ENCODE measurements at regions of chrX and their contacts with region 1.

Region 1: DNA sequence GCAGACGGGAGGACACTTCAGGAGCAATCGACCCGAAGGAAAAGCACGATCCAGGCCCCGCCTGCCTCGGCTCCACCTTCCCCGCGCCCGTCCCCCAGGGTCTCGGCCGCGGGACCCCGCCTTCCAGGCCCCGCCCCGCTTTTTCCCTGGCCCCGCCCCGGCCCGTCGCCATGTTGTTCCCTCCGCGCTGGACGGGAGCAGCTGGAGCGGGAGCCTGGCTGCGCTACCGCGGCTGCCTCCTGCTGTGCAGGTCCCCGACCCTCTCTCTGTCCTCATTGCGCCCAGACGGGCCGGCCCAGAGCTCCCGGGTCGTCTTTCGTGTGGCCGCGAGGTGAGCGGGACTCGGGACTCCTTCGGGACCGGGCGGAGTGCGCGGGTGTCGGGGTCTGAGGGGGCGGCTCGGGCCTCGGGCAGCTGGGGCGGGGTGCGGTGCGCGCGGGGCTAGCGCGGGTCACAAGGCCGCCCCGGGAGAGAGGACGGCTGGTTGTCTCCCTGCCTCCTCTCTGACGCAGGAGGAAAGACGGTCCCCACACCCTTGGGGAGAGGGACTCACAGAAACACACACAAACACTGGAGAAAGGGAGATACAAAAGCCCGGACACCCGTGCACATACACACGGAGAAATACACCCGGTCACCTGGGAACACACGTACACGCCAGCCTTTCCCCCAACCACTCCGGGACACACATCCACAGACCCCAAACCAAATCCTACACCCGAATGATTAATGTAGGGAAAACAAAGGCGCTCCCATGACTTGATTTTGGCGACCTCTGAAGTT is at the start of gene RAB9A:
- DNase-seq: peak; percentile 71
- H3K4me3 Mint-ChIP-seq: peak within 1 kb of the TSS; percentile 87
- H3K27ac Mint-ChIP-seq: peak within 1 kb of the TSS; percentile 93
- H3K4me1 Mint-ChIP-seq: peaks cover 48% of the 10 kb centered on the region
- H3K27me3 Mint-ChIP-seq: no peaks in the 10 kb centered on the region
- total RNA-seq, gene RAB9A: 13.0 and 14.6 TPM in 2 replicates

Region 2: DNA sequence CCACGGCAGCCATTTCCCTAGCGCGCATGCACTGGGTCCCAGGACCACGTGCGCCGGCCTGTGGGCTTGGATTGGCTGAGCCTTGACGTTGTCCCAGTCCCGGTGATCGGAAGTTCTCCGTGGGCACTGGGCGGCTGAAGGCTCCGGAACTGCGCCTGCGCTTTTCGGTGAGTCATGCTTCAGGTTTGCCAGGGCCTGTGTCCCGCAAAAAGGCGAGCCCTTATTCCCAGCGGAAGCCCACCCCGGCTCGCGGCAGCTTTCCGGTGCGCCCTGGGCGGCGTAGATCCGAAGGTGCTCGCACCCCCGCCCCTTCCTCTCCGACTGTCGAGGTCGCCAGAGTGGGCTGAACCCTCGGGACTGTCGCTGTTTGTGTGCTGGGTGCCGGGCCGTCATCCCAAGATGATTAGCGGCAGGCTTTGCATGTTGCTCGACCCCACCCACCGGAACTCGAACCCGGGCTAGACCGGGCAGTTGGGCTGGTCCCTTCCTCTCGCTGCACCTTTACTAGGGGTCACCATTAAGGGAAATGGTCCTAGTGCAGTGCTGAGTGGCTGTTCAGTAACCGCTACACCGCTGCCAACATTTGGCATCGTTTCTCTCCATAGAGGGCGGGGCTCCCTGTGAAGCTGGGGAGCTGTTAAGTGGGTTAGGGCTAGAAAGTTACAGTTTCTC is 36.0 kb before region 1 on chrX and contains the start of gene TCEANC:
- intact Hi-C with region 1: loop called (anchors 1 kb)
- DNase-seq: peak; percentile 91
- H3K4me3 Mint-ChIP-seq: peak within 1 kb of the TSS; percentile 84
- H3K27ac Mint-ChIP-seq: peak within 1 kb of the TSS; percentile 89
- H3K4me1 Mint-ChIP-seq: peaks cover 17% of the 10 kb centered on the region
- H3K27me3 Mint-ChIP-seq: no peaks in the 10 kb centered on the region
- total RNA-seq, gene TCEANC: 2.5 and 2.8 TPM in 2 replicates

Region 3: GRCh38 chrX:13669246-13669737 is 19.9 kb before region 1 on chrX:
- intact Hi-C with region 1: loop called (anchors 1 kb)
- DNase-seq: no peak
- H3K4me3 Mint-ChIP-seq: peak overlapping the region; percentile 7
- H3K27ac Mint-ChIP-seq: peak overlapping the region; percentile 91
- H3K4me1 Mint-ChIP-seq: peaks cover 10% of the 10 kb centered on the region
- H3K27me3 Mint-ChIP-seq: no peaks in the 10 kb centered on the region

Region 4: GRCh38 chrX:13734278-13735172 is 45.4 kb after region 1 on chrX and contains the starts of genes OFD1 and TRAPPC2:
- intact Hi-C with region 1: loop called (anchors 2 kb)
- DNase-seq: peak; percentile 87
- H3K4me3 Mint-ChIP-seq: peak within 1 kb of the TSS; percentile 95
- H3K27ac Mint-ChIP-seq: peak within 1 kb of the TSS; percentile 96
- H3K4me1 Mint-ChIP-seq: peaks cover 39% of the 10 kb centered on the region
- H3K27me3 Mint-ChIP-seq: no peaks in the 10 kb centered on the region
- total RNA-seq, gene OFD1: 21.0 and 23.4 TPM in 2 replicates
- total RNA-seq, gene TRAPPC2: 14.7 and 15.2 TPM in 2 replicates